WTC11 (cell line): ENCODE measurements at regions of chr2 and their contacts with region 1.

Region 1: DNA sequence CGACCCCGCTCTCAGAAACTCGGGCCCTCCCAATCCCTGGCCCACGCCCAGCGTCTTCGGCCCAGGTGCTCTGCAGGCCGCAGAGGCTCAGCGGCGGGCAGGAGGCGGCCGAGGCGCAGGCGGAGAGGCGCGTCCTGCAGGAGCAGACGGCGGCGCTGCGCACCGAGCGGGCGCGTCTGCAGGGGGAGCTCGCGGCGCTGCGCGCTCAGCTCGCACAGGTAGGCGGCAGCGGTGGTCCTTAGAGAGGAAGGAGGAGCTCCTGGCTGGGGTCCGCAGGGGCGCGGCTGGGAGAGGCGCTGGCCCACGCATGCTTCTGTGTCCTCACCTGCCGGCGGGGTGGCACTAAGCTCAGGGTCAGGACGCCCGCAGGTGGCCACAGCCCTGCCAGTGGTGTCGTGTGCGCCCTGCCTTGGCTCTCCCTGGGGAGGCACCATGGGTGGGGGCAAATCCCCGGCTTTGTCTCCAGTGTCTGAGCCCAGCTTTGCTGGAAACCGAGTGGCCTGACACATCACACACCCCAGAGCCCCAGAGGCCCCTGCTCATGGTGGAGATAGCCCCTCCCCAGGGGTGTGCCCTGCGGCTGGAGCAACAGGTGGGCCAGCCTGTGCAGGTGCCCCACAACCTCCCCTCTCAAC is 14.9 kb upstream of the SNED1 start:
- DNase-seq: peak; percentile 84
- ATAC-seq: peak; percentile 99
- H3K4me3 Mint-ChIP-seq: no peak overlapping the region
- H3K27ac Mint-ChIP-seq: no peak overlapping the region
- H3K4me1 Mint-ChIP-seq: no peaks in the 10 kb centered on the region
- H3K27me3 Mint-ChIP-seq: peaks cover 2% of the 10 kb centered on the region; the same call in 1 of the 2 replicates
- CTCF ChIP-seq: peak; percentile 60

Region 2: DNA sequence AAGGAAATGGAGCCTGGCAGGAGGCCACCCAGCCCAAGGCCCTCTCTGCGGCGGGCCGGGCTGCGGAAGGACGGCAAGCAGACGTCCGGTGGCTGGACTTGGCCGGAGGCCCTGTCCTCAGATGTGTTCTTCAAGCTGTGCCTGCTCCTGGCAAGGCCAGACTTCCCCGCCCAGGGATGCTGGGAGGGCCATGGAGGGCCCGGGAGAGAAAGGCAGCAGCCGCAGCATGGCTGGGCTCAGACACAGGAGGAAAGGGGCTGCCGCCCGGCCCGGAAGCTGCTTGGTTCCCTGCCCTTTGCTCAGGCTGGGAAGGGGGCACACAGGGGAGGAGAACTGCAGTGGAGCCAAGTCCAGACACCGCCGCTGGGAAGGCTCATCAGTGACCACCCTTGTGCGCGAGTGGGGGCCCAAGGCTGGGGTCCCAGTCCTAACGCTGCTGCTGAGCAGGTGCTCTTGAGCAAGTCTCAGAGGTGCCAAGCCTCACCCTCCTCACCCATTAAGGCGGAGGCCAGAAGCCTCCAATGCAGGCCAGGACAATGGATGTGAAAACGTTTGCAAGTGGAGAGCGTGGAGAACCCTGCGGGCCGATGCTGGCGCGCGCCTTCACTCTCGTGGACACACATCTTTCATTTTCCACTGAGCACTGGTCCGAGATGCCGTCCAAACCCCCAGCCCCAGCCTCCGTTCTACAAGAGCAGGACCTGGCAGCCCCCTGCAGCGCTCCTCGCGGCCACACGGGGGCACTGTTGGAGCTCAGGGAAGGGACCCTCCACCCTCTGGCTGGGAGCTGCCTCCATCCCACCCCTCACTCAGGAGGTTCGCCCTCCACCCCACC is 69.5 kb before region 1 on chr2:
- CTCF ChIA-PET with region 1: interaction called, 33 read pairs
- POLR2A ChIA-PET with region 1: interaction called, 3 read pairs
- DNase-seq: peak; percentile 95
- ATAC-seq: peak; percentile 75
- H3K4me3 Mint-ChIP-seq: no peak overlapping the region
- H3K27ac Mint-ChIP-seq: no peak overlapping the region
- H3K4me1 Mint-ChIP-seq: no peaks in the 10 kb centered on the region
- H3K27me3 Mint-ChIP-seq: peaks cover 6% of the 10 kb centered on the region
- CTCF ChIP-seq: peak; percentile 96

Region 3: GRCh38 chr2:240972636-240973521 is 10.6 kb before region 1 on chr2:
- CTCF ChIA-PET with region 1: interaction called, 17 read pairs
- POLR2A ChIA-PET with region 1: no interaction called
- DNase-seq: no peak
- ATAC-seq: no peak
- H3K4me3 Mint-ChIP-seq: no peak overlapping the region
- H3K27ac Mint-ChIP-seq: no peak overlapping the region
- H3K4me1 Mint-ChIP-seq: no peaks in the 10 kb centered on the region
- H3K27me3 Mint-ChIP-seq: no peaks in the 10 kb centered on the region
- CTCF ChIP-seq: no peak

Region 4: DNA sequence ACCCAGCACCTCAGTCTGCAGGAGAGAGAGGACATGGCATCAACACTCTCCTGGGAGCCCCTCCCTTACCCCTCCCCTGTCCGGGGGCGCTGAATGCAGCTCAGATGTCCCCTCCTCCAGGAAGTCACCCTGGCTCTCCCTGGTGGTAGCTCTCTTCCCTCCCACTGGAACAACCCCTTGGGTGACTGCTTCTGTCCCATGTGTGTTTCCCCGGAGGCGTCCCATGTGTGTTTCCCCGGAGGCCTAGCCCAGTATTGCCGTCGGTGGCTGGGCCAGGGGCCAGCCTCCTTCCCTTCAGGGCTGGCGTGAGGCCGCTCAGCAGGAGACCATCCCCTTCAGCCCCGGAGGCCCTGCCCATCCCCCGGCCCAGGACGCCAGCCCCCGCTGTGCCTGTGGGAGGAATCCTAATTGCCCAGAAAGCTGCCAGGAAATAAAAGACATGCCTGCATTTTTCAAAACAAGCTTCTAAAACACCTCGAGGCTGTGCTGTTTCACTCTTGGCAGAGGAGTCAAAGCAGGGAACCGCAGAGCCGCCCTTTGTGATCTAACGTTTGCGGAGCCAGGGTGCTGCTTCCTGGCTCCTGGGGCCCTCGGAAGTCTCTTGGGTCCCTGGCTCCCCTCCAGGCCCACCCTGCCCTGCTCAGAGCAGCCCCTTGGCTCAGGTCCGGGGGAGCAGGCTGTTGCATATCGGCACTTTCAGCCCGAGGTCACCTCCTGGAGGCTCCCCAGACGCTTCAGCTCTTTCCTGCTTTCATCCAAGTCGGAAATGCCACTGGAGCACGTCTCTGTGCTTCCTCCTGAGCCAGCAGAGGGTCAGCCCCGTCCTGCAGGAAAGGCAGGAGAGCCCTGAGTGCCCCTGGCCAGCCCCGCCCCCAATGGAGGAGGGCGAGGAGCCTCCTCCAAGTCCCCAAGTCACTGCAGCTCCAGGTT is 26.4 kb after region 1 on chr2:
- CTCF ChIA-PET with region 1: interaction called, 13 read pairs
- POLR2A ChIA-PET with region 1: no interaction called
- DNase-seq: peak; percentile 67
- ATAC-seq: peak; percentile 78
- H3K4me3 Mint-ChIP-seq: peak overlapping the region; percentile 48
- H3K27ac Mint-ChIP-seq: no peak overlapping the region
- H3K4me1 Mint-ChIP-seq: peaks cover 19% of the 10 kb centered on the region
- H3K27me3 Mint-ChIP-seq: peaks cover 10% of the 10 kb centered on the region; the same call in 1 of the 2 replicates
- CTCF ChIP-seq: no peak

Region 5: DNA sequence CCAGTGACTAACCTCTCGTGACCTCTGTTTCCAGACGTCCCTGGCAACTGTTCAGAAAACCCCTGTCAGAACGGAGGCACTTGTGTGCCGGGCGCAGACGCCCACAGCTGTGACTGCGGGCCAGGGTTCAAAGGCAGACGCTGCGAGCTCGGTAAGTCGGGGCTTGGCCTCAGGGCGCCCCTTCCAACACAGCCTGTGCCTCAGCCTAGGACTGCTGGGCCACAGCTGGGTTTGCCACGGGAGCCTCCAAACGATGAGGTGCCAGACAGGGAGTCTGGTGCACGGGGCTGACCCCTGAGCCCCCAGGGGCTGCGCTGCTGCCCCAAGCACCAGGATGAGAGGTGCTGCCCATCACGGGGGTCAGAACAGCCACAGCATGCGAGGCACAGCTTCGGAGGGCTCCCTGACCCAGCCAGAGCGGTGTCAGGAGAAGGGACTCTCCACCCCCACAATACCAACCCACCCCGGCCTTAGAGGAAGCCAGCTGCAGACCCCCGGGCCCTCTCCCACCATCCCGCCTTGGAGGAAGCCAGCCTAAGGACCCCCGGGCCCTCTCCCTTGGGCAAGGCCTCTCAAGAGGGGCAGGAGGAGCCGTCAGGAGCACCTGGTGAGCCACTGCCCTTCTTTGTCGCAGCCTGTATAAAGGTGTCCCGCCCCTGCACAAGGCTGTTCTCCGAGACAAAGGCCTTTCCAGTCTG is 98.3 kb after region 1 on chr2:
- CTCF ChIA-PET with region 1: interaction called, 14 read pairs
- POLR2A ChIA-PET with region 1: no interaction called
- DNase-seq: no peak
- ATAC-seq: no peak
- H3K4me3 Mint-ChIP-seq: no peak overlapping the region
- H3K27ac Mint-ChIP-seq: no peak overlapping the region
- H3K4me1 Mint-ChIP-seq: no peaks in the 10 kb centered on the region
- H3K27me3 Mint-ChIP-seq: no peaks in the 10 kb centered on the region
- CTCF ChIP-seq: no peak